Psoas muscle (tissue), 8 donors: ENCODE measurements at regions of chr9 and their contacts with region 1.

Region 1: DNA sequence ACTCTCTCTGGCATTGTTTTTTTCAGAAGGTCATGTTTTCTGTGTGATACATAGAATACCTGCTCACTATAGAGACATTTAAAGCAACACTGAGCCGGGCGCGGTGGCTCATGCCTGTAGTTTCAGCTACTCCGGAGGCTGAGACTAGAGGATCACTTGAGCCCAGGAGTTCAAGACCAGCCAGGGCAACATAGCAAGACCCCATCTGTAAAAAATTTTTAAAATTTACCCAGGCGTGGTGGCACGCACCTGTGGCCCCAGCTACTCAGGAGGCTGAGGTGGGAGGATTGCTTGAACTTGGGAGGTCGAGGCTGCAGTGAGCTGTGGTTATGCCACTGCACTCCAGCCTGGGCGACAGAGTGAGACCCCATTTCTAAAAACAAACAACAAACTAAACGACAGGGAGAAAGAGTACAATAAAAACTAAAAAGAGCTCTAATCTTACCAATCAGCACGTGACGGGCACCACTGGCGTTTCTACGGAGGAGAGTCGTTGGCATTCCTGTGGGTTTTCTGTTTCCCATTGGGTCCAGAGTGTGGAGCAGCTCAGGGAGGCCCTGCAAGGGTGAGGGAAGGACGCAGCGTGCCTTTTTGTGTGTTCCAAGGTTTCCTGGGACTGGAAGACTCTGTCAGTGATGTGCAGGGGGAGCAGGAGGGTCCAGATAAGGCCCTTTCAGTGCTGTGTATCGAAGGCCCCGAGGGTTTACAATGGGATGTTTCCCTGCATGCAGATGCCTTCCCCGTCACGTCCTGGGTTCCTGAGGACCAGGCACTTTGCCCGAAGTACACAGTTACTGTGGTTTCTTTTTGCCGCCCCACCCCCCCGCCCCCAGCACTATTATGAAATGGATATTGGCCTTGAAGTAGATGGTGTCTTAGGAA is 7.2 kb upstream of the RNU6ATAC start:
- DNase-seq: peak; percentile 41 to 62
- ATAC-seq: no peak
- H3K4me3 ChIP-seq: no peak overlapping the region
- H3K27ac ChIP-seq: peak overlapping the region; percentile 36
- H3K4me1 ChIP-seq: peaks cover 5% of the 10 kb centered on the region
- H3K27me3 ChIP-seq: no peaks in the 10 kb centered on the region
- CTCF ChIP-seq: no peak

Region 2: GRCh38 chr9:134217832-134218629 is 46.5 kb after region 1 on chr9:
- intact Hi-C with region 1: loop called in 1 of 2 experiments (anchors 5 kb)
- DNase-seq: peak; percentile 15 to 34
- ATAC-seq: peak; percentile 44 to 76 (median 59)
- H3K4me3 ChIP-seq: no peak overlapping the region
- H3K27ac ChIP-seq: no peak overlapping the region
- H3K4me1 ChIP-seq: peaks cover 5% of the 10 kb centered on the region
- H3K27me3 ChIP-seq: no peaks in the 10 kb centered on the region
- CTCF ChIP-seq: peak; percentile 18

Region 3: DNA sequence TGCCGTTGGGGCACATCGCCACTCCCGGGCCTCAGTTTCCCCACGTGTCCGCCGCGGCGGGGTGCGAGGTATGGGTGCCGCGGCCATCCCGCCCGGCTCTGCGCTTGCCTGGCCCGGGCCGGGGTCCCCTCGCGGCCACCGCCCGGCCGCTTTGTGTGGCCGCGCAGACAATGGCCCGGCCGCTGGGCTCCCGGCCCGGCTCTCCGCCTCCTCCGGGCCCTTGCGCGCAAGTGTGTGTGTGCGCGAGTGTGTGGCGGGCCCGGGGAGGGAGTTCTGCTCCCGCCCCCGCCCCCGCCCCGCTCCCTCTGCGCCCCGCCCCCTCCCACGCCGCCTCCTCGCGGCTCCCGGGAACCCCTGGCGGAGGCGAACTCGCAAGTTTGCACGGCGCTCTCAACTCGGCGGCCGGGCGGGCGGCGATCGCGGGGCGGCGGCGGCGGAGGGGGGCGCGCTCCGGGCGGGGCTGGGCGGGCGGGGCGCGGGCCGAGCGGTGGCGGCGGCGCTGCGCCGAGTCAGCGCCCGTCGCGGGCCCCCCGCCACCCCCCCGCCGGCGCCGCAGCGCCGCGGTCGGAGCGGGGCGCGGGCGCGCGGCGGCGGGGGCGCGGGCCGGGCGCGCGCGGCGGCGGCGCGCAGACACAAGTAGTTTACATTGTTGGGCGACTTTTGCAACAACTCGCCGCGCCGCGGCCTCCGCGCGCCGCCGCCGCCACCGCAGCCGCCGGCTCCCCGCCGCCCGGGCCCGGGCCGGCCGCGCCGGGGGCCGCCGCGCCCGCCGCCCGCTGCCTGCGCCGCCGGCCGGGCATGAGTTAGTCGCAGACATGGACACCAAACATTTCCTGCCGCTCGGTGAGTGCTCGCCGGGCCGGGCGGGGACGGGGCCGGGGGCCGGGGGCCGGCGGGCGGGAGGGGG is 154.5 kb after region 1 on chr9 and contains the start of gene RXRA:
- intact Hi-C with region 1: loop called (anchors 2 to 5 kb)
- DNase-seq: peak; percentile 90 to 95
- ATAC-seq: peak; percentile 54 to 58 (median 56)
- H3K4me3 ChIP-seq: peak within 1 kb of the TSS; percentile 92
- H3K27ac ChIP-seq: peak within 1 kb of the TSS; percentile 98
- H3K4me1 ChIP-seq: peaks cover 39% of the 10 kb centered on the region
- H3K27me3 ChIP-seq: no peaks in the 10 kb centered on the region
- CTCF ChIP-seq: no peak
- total RNA-seq, gene RXRA: 84.3 to 192 (median 147) TPM

Region 4: GRCh38 chr9:134443168-134444037 is 271.8 kb after region 1 on chr9:
- intact Hi-C with region 1: loop called (anchors 2 kb)
- DNase-seq: peak; percentile 91 to 96
- ATAC-seq: peak; percentile 78 to 87 (median 83)
- H3K4me3 ChIP-seq: no peak overlapping the region
- H3K27ac ChIP-seq: peak overlapping the region; percentile 21
- H3K4me1 ChIP-seq: peaks cover 40% of the 10 kb centered on the region
- H3K27me3 ChIP-seq: no peaks in the 10 kb centered on the region
- CTCF ChIP-seq: peak; percentile 99